ENCODE measurements at regions of chr1 and their contacts with region 1.

Region 1: DNA sequence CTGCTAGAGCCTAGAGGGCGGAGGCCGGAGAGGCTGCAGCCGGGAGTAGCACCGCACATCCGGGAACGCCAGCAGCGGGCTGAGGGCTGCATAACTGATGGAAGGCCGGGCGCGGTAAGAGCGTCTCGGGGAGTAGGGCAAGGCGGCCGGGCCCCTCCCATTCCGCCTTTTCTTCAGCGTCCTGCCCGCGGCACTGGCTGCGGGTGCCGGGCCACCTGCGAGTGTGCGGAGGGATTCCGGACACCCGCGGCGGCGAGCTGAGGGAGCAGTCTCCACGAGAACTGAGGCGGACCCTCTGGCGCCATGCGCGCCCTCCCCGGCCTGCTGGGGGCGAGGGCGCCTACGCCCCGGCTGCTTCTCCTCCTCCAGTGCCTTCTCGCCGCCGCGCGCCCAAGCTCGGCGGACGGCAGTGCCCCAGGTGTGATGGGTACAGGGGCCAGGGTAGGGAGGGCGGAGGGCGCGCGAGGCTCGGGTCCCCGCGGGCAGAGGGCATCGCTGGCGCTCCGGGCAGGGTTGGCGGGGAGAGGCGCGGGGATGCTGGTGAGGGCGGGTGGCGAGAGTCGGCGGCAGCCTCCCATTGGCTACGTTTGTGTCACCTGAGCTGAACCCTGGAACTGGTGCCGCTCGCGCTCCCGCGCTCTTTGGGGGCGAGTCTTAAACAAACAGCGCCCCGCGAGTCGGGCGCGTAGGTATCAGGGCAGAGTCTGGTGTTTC is 334.4 kb downstream of the SRGAP2C start:
- DNase-seq: peak; percentile 61
- ATAC-seq: peak; percentile 89
- H3K4me3 ChIP-seq: peak overlapping the region; percentile 65 to 76 (median 75)
- H3K27ac ChIP-seq: peak overlapping the region; percentile 88
- H3K4me1 ChIP-seq: peaks cover 61% of the 10 kb centered on the region
- H3K27me3 ChIP-seq: no peaks in the 10 kb centered on the region
- CTCF ChIP-seq: no peak; the same call in 1 of the 2 replicates
- EP300 ChIP-seq: peak in 1 of 2 experiments; percentile 2; a peak in 1 of 4 replicates
- POLR2A ChIP-seq: peak in 1 of 2 experiments; percentile 69
- RAD21 ChIP-seq: no peak

Region 2: GRCh38 chr1:121408354-121408753 is 110.8 kb before region 1 on chr1:
- CTCF ChIA-PET with region 1: no interaction called
- POLR2A ChIA-PET with region 1: no interaction called
- in situ Hi-C with region 1: no loop called
- intact Hi-C with region 1: no loop called
- DNase-seq: no peak
- ATAC-seq: no peak
- H3K4me3 ChIP-seq: no peak overlapping the region
- H3K27ac ChIP-seq: no peak overlapping the region
- H3K4me1 ChIP-seq: no peaks in the 10 kb centered on the region
- H3K27me3 ChIP-seq: no peaks in the 10 kb centered on the region
- CTCF ChIP-seq: no peak
- EP300 ChIP-seq: no peak
- POLR2A ChIP-seq: no peak
- RAD21 ChIP-seq: no peak

Region 3: DNA sequence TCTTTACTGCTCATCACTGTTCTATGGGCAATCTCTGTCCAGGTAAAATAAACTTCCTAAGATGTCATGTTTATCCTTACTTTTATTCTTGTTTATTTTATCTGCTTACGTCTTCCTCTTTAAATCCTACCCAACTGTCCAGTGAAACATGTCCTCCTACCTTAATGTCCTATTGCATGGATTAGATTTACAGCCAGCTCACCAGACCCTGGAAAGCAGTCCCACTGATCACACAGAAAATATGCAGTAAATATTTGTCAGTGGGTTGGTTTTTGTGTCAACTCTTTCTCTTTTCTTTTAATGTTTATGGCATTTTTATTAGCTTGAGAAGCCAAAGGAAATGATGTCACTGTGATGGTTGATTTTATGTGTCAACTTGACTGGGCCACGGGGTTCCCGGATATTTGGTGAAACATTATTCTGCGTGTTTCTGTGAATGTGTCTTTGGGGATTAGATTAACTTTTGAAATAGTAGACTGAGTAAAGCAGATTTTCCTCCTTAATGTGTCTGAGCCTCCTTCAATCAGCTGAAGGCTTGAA is 76.1 kb before region 1 on chr1:
- CTCF ChIA-PET with region 1: no interaction called
- POLR2A ChIA-PET with region 1: no interaction called
- in situ Hi-C with region 1: no loop called
- intact Hi-C with region 1: loop called (anchors 10 kb)
- DNase-seq: no peak
- ATAC-seq: no peak
- H3K4me3 ChIP-seq: no peak overlapping the region
- H3K27ac ChIP-seq: no peak overlapping the region
- H3K4me1 ChIP-seq: no peaks in the 10 kb centered on the region
- H3K27me3 ChIP-seq: no peaks in the 10 kb centered on the region
- CTCF ChIP-seq: no peak
- EP300 ChIP-seq: no peak
- POLR2A ChIP-seq: no peak
- RAD21 ChIP-seq: no peak

Region 4: DNA sequence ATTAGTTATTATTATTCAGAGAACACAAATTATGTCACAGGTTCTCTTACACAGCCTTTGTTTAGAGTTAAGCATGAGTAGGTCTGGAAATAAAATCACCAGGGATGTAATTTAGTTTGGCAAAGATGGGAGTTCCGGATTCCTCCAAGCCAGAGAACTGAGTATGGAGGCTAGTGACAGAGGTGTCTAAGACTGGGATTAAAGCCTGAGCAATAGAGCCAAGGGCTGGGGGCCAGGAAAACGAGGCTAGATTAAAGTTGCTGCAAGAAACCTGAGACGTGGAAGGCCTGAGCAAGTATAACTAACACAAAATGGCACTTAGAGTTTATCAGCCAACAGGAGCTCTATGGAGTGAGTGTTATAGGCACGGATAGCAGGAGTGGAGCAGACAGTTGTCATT is 47.1 kb after region 1 on chr1:
- CTCF ChIA-PET with region 1: no interaction called
- POLR2A ChIA-PET with region 1: no interaction called
- in situ Hi-C with region 1: no loop called
- intact Hi-C with region 1: no loop called
- DNase-seq: no peak
- ATAC-seq: no peak
- H3K4me3 ChIP-seq: no peak overlapping the region
- H3K27ac ChIP-seq: no peak overlapping the region
- H3K4me1 ChIP-seq: no peaks in the 10 kb centered on the region
- H3K27me3 ChIP-seq: no peaks in the 10 kb centered on the region
- CTCF ChIP-seq: no peak
- EP300 ChIP-seq: no peak
- POLR2A ChIP-seq: no peak
- RAD21 ChIP-seq: no peak

Region 5: GRCh38 chr1:121586369-121587229 is 67.4 kb after region 1 on chr1:
- CTCF ChIA-PET with region 1: interaction called, 3 read pairs
- POLR2A ChIA-PET with region 1: interaction called, 64 read pairs
- in situ Hi-C with region 1: no loop called
- intact Hi-C with region 1: no loop called
- DNase-seq: peak; percentile 97
- ATAC-seq: peak; percentile 97
- H3K4me3 ChIP-seq: peak overlapping the region in 2 of 3 experiments; percentile 5 to 16; a peak in 2 of 6 replicates
- H3K27ac ChIP-seq: peak overlapping the region; percentile 98
- H3K4me1 ChIP-seq: peaks cover 40% of the 10 kb centered on the region
- H3K27me3 ChIP-seq: no peaks in the 10 kb centered on the region
- CTCF ChIP-seq: peak; percentile 74
- EP300 ChIP-seq: peak in 1 of 2 experiments; percentile 76; a peak in 1 of 4 replicates
- POLR2A ChIP-seq: peak; percentile 27 to 58; a peak in 3 of 4 replicates
- RAD21 ChIP-seq: peak; percentile 81

Measured in HepG2 (cell line).